K562 (cell line): ENCODE measurements at regions of chr11 and their contacts with region 1.

Region 1: GRCh38 chr11:118605116-118605867 is 2.1 kb upstream of the PHLDB1 start:
- DNase-seq: peak; percentile 52 to 86 (median 64)
- ATAC-seq: peak; percentile 16
- H3K4me3 ChIP-seq: no peak overlapping the region
- H3K27ac ChIP-seq: peak overlapping the region; percentile 14; the same call in 1 of the 3 replicates
- H3K4me1 ChIP-seq: peaks cover 54 to 55% of the 10 kb centered on the region in 2 experiments
- H3K27me3 ChIP-seq: no peaks in the 10 kb centered on the region
- CTCF ChIP-seq: no peak
- EP300 ChIP-seq: no peak; the same call in 1 of the 2 replicates
- POLR2A ChIP-seq: no peak
- RAD21 ChIP-seq: no peak

Region 2: GRCh38 chr11:118240999-118241768 is 364.1 kb before region 1 on chr11:
- CTCF ChIA-PET with region 1: no interaction called
- POLR2A ChIA-PET with region 1: no interaction called
- in situ Hi-C with region 1: no loop called
- intact Hi-C with region 1: no loop called
- DNase-seq: peak; percentile 35 to 77 (median 51)
- ATAC-seq: peak; percentile 83
- H3K4me3 ChIP-seq: no peak overlapping the region
- H3K27ac ChIP-seq: peak overlapping the region; percentile 58; the same call in 2 of the 3 replicates
- H3K4me1 ChIP-seq: peaks cover 3 to 24% of the 10 kb centered on the region in 2 experiments
- H3K27me3 ChIP-seq: peaks cover 0 to 9% of the 10 kb centered on the region in 2 experiments; a peak in 2 of 5 replicates
- CTCF ChIP-seq: no peak
- EP300 ChIP-seq: peak; percentile 97
- POLR2A ChIP-seq: no peak
- RAD21 ChIP-seq: no peak

Region 3: GRCh38 chr11:118572061-118572980 is 33.0 kb before region 1 on chr11 and contains the start of gene ARCN1:
- CTCF ChIA-PET with region 1: no interaction called
- POLR2A ChIA-PET with region 1: interaction called, 9 read pairs
- in situ Hi-C with region 1: no loop called
- intact Hi-C with region 1: loop called (anchors 2 kb)
- DNase-seq: peak; percentile 86 to 89 (median 88)
- ATAC-seq: peak; percentile 89
- H3K4me3 ChIP-seq: peak within 1 kb of the TSS; percentile 80
- H3K27ac ChIP-seq: peak within 1 kb of the TSS; percentile 94
- H3K4me1 ChIP-seq: peaks cover 4 to 10% of the 10 kb centered on the region in 2 experiments
- H3K27me3 ChIP-seq: no peaks in the 10 kb centered on the region
- CTCF ChIP-seq: no peak
- EP300 ChIP-seq: no peak
- POLR2A ChIP-seq: peak; percentile 90
- RAD21 ChIP-seq: no peak
- polyA plus RNA-seq, gene ARCN1: 30.0 to 43.5 TPM